ENCODE measurements at regions of chr11 and their contacts with region 1.

Region 1: DNA sequence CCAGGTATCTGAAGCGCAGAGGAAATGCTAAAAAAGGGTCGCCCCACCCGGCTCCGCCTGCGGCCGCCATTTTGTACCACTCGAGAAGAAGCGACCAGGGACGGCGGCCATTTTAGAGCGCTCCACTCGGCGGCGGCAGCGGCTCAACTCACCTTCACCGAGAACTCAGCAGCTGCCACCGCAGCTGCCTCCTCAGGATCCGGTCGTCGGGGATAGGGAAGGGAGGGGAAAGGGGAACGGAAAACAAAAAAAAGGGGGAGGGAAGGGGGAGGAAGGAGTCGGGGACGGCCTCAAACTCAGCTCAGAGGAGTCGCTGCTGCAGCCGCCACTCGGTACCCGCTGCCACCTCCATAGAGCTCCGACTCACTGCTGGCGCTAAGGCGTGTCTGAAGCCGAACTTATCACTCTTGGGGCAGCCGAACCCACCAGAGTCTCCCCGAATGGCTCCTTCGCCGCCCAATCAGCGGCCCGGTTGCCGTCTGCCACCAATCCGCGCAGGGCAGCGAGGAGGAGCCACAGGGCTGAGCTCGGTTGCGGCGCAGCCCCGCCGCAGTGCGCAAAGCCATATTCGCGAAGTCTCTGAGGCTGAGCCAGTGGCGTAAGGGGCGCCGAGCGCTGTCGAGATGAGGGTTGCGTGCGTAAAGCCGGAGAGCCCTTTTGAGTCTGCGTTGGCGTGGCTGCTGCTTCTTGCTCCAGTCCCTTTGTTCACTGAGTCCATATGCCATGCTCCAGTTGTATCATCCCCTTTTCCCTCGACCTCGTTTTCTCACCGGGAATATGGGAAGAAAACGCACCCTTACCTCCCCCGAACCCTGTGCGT is at the start of gene EIF4G2:
- DNase-seq: peak; percentile 96 to 97
- H3K4me3 ChIP-seq: peak within 1 kb of the TSS; percentile 90 to 97 (median 94)
- H3K27ac ChIP-seq: peak within 1 kb of the TSS; percentile 96
- H3K4me1 ChIP-seq: peaks cover 0 to 5% (median 2%) of the 10 kb centered on the region in 4 experiments; a peak in 4 of 7 replicates
- H3K27me3 ChIP-seq: no peaks in the 10 kb centered on the region
- CTCF ChIP-seq: no peak
- EP300 ChIP-seq: 0 out of 3 replicates have a peak, but pooled peaks of 1 of the 2 experiments have one; percentile 5
- POLR2A ChIP-seq: peak; percentile 99 to 100
- RAD21 ChIP-seq: no peak; a peak in 1 of 4 replicates
- total RNA-seq, gene EIF4G2: 949 and 964 TPM in 2 replicates

Region 2: GRCh38 chr11:10750838-10751580 is 57.8 kb before region 1 on chr11 and contains the start of gene CTR9:
- CTCF ChIA-PET with region 1: no interaction called
- POLR2A ChIA-PET with region 1: interaction called, 15 read pairs
- DNase-seq: peak; percentile 77 to 95
- H3K4me3 ChIP-seq: peak within 1 kb of the TSS; percentile 75 to 91 (median 80)
- H3K27ac ChIP-seq: peak within 1 kb of the TSS; percentile 79; the same call in 1 of the 2 replicates
- H3K4me1 ChIP-seq: peaks cover 0 to 4% (median 1%) of the 10 kb centered on the region in 4 experiments; a peak in 2 of 7 replicates
- H3K27me3 ChIP-seq: no peaks in the 10 kb centered on the region
- CTCF ChIP-seq: peak in 1 of 3 experiments; percentile 9; a peak in 1 of 4 replicates
- EP300 ChIP-seq: no peak
- POLR2A ChIP-seq: peak; percentile 32 to 94
- RAD21 ChIP-seq: peak in 1 of 2 experiments; percentile 18; a peak in 1 of 4 replicates
- total RNA-seq, gene CTR9: 37.7 and 37.8 TPM in 2 replicates

Region 3: DNA sequence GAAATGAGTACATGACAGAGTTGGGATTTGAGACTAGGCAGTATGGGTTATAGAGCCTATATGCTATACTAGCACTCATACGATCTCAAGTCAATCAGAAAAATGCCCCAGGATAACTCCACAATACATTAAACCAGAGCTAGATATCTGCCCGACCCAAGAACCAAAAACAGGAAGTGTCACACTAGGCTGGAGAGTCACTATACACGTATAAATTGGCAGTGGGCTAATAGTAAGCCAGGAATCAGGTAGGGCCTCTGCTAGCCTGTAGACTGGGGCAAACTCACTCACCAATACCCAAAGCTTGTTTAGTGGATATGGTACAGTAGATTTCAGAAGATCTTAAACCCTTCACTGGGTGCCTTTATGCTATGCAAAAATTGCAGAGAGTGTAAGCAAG is 16.1 kb after region 1 on chr11:
- CTCF ChIA-PET with region 1: interaction called, 7 read pairs
- POLR2A ChIA-PET with region 1: interaction called, 595 read pairs
- DNase-seq: no peak
- H3K4me3 ChIP-seq: no peak overlapping the region
- H3K27ac ChIP-seq: no peak overlapping the region
- H3K4me1 ChIP-seq: no peaks in the 10 kb centered on the region
- H3K27me3 ChIP-seq: no peaks in the 10 kb centered on the region
- CTCF ChIP-seq: no peak
- EP300 ChIP-seq: no peak
- POLR2A ChIP-seq: no peak
- RAD21 ChIP-seq: no peak

Region 4: GRCh38 chr11:10847960-10848870 is 39.5 kb after region 1 on chr11:
- CTCF ChIA-PET with region 1: interaction called, 4 read pairs
- POLR2A ChIA-PET with region 1: interaction called, 144 read pairs
- DNase-seq: no peak
- H3K4me3 ChIP-seq: no peak overlapping the region
- H3K27ac ChIP-seq: no peak overlapping the region
- H3K4me1 ChIP-seq: no peaks in the 10 kb centered on the region
- H3K27me3 ChIP-seq: no peaks in the 10 kb centered on the region
- CTCF ChIP-seq: no peak
- EP300 ChIP-seq: no peak
- POLR2A ChIP-seq: no peak
- RAD21 ChIP-seq: no peak

Region 5: GRCh38 chr11:10878408-10879214 is 69.8 kb after region 1 on chr11:
- CTCF ChIA-PET with region 1: interaction called, 5 read pairs
- POLR2A ChIA-PET with region 1: interaction called, 28 read pairs
- DNase-seq: no peak
- H3K4me3 ChIP-seq: no peak overlapping the region
- H3K27ac ChIP-seq: no peak overlapping the region
- H3K4me1 ChIP-seq: peaks cover 0 to 2% (median 0%) of the 10 kb centered on the region in 4 experiments; a peak in 1 of 7 replicates
- H3K27me3 ChIP-seq: no peaks in the 10 kb centered on the region
- CTCF ChIP-seq: peak in 2 of 3 experiments; percentile 60 to 86; a peak in 3 of 4 replicates
- EP300 ChIP-seq: no peak
- POLR2A ChIP-seq: no peak
- RAD21 ChIP-seq: peak; percentile 38 to 55; a peak in 3 of 4 replicates

Region 6: GRCh38 chr11:10925144-10925926 is 116.6 kb after region 1 on chr11:
- CTCF ChIA-PET with region 1: interaction called, 4 read pairs
- POLR2A ChIA-PET with region 1: interaction called, 59 read pairs
- DNase-seq: no peak
- H3K4me3 ChIP-seq: no peak overlapping the region
- H3K27ac ChIP-seq: no peak overlapping the region
- H3K4me1 ChIP-seq: peaks cover 0 to 5% (median 1%) of the 10 kb centered on the region in 4 experiments; a peak in 3 of 7 replicates
- H3K27me3 ChIP-seq: peaks cover 0 to 7% (median 6%) of the 10 kb centered on the region in 4 experiments; a peak in 5 of 7 replicates
- CTCF ChIP-seq: no peak
- EP300 ChIP-seq: no peak
- POLR2A ChIP-seq: no peak
- RAD21 ChIP-seq: no peak

Measured in H1 (cell line).